Heart right ventricle (tissue), 16 donors: ENCODE measurements at regions of chr7 and their contacts with region 1.

Region 1: GRCh38 chr7:38222481-38223096 is 44.5 kb downstream of the STARD3NL start:
- DNase-seq: peak in 1 of 2 donors; percentile 36
- ATAC-seq: peak in 7 of 8 donors; percentile 66 to 85 (median 71)
- H3K4me3 ChIP-seq: no peak overlapping the region
- H3K27ac ChIP-seq: peak overlapping the region in 1 of 10 donors; percentile 41
- H3K4me1 ChIP-seq: peaks cover 0 to 16% (median 0%) of the 10 kb centered on the region in 9 donors
- H3K27me3 ChIP-seq: no peaks in the 10 kb centered on the region
- CTCF ChIP-seq: peak; percentile 73 to 93 (median 89)

Region 2: GRCh38 chr7:37916673-37917660 is 305.6 kb before region 1 on chr7 and contains the start of gene SFRP4:
- intact Hi-C with region 1: loop called in 2 of 10 experiments (anchors 5 to 10 kb)
- DNase-seq: peak; percentile 61 to 67
- ATAC-seq: peak; percentile 57 to 83 (median 62)
- H3K4me3 ChIP-seq: peak within 1 kb of the TSS; percentile 31 to 62 (median 55)
- H3K27ac ChIP-seq: peak within 1 kb of the TSS; percentile 12 to 82 (median 69)
- H3K4me1 ChIP-seq: peaks cover 4 to 50% (median 32%) of the 10 kb centered on the region in 9 donors
- H3K27me3 ChIP-seq: peaks cover 0 to 69% (median 17%) of the 10 kb centered on the region in 7 donors
- CTCF ChIP-seq: peak; percentile 35 to 73 (median 68)
- total RNA-seq, gene SFRP4: 0.23 to 9.9 (median 3.4) TPM

Region 3: DNA sequence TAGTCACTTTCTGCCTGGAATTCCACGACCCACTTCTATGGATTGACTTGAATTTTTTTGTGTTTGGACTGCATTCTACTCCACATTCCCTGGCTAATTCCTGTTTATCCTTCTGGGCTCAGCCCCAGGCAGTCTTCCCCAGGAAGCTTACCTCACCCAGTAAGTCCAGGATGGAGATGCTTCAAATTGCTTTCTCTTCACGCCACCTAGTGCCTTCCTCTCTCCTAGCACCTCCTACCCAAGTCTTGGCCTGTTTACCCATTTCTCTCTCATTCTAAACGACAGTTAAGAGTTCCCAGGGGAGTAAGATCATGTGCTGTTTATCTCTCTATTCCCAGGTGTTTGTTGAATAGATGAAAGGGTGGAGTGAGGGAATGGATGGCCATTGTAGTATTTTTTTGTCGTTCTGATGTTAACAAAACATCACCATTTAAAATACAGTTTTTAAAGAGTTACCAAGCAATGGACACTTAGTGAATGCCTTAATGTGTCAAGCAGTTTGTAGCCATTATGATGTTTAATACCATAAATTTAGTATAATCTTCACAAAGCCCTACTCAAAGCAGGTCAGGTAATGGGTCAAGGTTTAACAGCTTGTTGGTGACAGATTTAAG is 96.3 kb after region 1 on chr7:
- intact Hi-C with region 1: loop called in 5 of 10 experiments (anchors 5 to 10 kb)
- DNase-seq: peak in 1 of 2 donors; percentile 20
- ATAC-seq: peak in 7 of 8 donors; percentile 79 to 92 (median 86)
- H3K4me3 ChIP-seq: no peak overlapping the region
- H3K27ac ChIP-seq: peak overlapping the region in 3 of 10 donors; percentile 33 to 63 (median 61)
- H3K4me1 ChIP-seq: peaks cover 0 to 23% (median 0%) of the 10 kb centered on the region in 9 donors
- H3K27me3 ChIP-seq: no peaks in the 10 kb centered on the region
- CTCF ChIP-seq: peak; percentile 12 to 71 (median 61)

Region 4: DNA sequence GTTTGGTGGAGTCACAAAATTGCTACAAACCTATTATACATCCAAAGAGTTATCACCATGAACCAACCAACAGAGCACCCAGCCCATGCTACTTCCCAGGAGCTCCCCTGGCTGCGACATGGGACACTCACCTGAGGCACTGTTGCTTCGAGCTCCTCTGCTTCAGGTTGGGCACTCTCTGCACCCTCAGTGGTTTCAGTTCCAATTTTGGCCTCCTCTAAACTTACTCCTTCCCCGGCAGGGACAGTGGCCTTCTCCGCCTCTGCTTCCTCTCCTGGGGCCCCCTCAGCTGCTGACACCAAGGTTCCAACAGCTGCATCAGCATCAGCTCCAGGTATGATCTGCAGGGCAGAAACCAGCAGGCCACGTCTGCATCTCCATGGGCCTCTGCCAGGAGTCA is 171.3 kb after region 1 on chr7:
- intact Hi-C with region 1: no loop called
- DNase-seq: no peak
- ATAC-seq: no peak
- H3K4me3 ChIP-seq: no peak overlapping the region
- H3K27ac ChIP-seq: no peak overlapping the region
- H3K4me1 ChIP-seq: peaks cover 0 to 13% (median 0%) of the 10 kb centered on the region in 9 donors
- H3K27me3 ChIP-seq: no peaks in the 10 kb centered on the region
- CTCF ChIP-seq: no peak

Region 5: DNA sequence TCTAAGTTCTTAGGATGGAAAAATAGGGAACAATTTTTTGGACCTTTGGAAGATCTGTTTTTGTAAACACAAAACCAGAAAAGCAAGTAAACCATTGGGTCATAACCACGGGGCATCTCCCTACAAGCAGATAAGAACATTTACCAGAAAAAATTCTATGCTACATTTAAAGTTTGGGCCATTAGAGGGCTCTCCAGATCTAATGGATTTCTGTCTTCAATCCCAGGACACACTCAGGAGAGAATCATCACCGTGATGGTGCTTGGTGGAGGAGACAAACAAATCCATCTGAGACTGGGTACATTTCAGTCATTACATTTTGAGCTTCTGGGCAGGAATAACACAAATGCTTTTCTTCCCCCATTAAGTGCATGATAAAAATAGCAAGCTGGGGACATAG is 229.3 kb after region 1 on chr7:
- intact Hi-C with region 1: no loop called
- DNase-seq: no peak
- ATAC-seq: peak in 5 of 8 donors; percentile 51 to 81 (median 68)
- H3K4me3 ChIP-seq: no peak overlapping the region
- H3K27ac ChIP-seq: no peak overlapping the region
- H3K4me1 ChIP-seq: peaks cover 0 to 19% (median 9%) of the 10 kb centered on the region in 9 donors
- H3K27me3 ChIP-seq: no peaks in the 10 kb centered on the region
- CTCF ChIP-seq: peak in 7 of 9 donors; percentile 9 to 55 (median 44)